ENCODE measurements at regions of chr4 and their contacts with region 1.

Region 1: GRCh38 chr4:22730021-22730420 is 37.3 kb downstream of the GBA3 start:
- DNase-seq: no peak
- H3K4me3 Mint-ChIP-seq: no peak overlapping the region
- H3K27ac Mint-ChIP-seq: no peak overlapping the region
- H3K4me1 Mint-ChIP-seq: peaks cover 17% of the 10 kb centered on the region
- H3K27me3 Mint-ChIP-seq: peaks cover 6% of the 10 kb centered on the region

Region 2: DNA sequence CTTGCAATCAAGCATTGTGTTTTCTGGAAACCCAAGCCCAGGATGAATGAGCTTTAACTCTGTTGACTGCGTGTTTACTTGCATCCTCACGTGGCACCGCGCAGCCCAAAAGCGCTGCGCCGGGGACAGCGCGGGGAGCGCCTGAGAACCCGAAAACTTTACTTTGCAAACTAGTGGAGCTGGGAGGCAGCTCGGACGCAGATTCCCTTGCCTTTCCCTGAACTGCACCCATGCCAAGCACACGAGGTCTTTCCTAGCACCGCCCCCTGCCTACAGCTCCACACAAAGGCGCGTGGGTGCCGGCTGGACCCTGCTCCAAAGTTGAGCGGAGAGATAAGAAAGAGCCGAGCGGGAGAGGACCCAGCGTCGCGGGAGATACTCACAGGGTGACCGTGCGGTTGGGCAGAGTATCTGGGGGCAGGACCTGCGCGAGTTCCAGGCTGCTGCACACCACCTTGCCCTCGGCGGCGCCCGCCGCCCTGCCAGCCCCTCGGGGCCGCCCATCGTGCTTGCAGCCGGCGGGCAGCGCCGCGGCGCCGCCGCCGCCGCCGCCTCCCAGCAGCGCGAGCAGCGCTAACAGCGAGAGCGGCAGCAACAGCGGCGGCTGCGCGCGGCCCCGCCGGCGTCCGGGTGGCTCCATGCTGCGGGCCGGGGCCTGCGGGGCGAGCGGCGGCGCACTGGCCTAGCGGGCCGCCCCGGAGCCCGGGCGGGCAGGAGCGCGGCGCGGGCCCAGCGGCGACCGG is 214.7 kb before region 1 on chr4:
- intact Hi-C with region 1: no loop called
- DNase-seq: peak; percentile 46
- H3K4me3 Mint-ChIP-seq: peak overlapping the region; percentile 100
- H3K27ac Mint-ChIP-seq: peak overlapping the region; percentile 98
- H3K4me1 Mint-ChIP-seq: peaks cover 25% of the 10 kb centered on the region
- H3K27me3 Mint-ChIP-seq: no peaks in the 10 kb centered on the region

Region 3: GRCh38 chr4:22707390-22707789 is 22.6 kb before region 1 on chr4:
- intact Hi-C with region 1: loop called (anchors 1 kb)
- DNase-seq: no peak
- H3K4me3 Mint-ChIP-seq: no peak overlapping the region
- H3K27ac Mint-ChIP-seq: peak overlapping the region; percentile 25
- H3K4me1 Mint-ChIP-seq: peaks cover 22% of the 10 kb centered on the region
- H3K27me3 Mint-ChIP-seq: no peaks in the 10 kb centered on the region

Measured in activated T-helper 2 cell treated with anti-CD3 and anti-CD28 coated beads, Interferon-gamma antibody, Interleukin-2, Interleukin-4, amounts not matched to agents 10 μg/mL and 5 μg/mL and 100 μg/mL, durations not matched to agents 14 hours and 24 hours and 36 hours (primary cell).